ENCODE measurements at regions of chr10 and their contacts with region 1.

Region 1: DNA sequence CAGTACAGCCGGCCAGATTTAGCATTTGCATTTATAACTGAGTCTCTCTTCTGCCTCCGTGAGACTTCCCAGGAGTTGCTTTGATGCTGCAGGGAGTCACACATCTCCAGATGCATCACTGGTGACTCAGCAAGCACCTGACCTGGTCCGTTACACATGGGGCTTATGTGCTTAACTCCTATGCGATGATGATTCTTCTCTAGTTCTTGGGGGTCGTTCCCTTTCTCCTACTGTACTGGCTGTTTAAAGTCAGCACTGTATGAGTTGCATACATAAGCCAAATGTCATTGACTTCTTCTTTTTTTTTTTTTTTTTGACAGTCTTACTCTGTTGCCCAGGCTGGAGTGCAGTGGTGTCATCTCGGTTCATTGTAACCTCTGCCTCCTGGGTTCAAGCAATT is 13.0 kb upstream of the AKR1E2 start:
- DNase-seq: no peak
- ATAC-seq: no peak
- H3K4me3 Mint-ChIP-seq: no peak overlapping the region
- H3K27ac Mint-ChIP-seq: no peak overlapping the region
- H3K4me1 Mint-ChIP-seq: no peaks in the 10 kb centered on the region
- H3K27me3 Mint-ChIP-seq: peaks cover 8% of the 10 kb centered on the region

Region 2: GRCh38 chr10:4825851-4826665 is 13.0 kb after region 1 on chr10 and contains the start of gene AKR1E2:
- CTCF ChIA-PET with region 1: interaction called, 20 read pairs
- POLR2A ChIA-PET with region 1: no interaction called
- DNase-seq: peak; percentile 88
- ATAC-seq: peak; percentile 97
- H3K4me3 Mint-ChIP-seq: peak within 1 kb of the TSS; percentile 77
- H3K27ac Mint-ChIP-seq: peak within 1 kb of the TSS; percentile 67
- H3K4me1 Mint-ChIP-seq: peaks cover 17% of the 10 kb centered on the region
- H3K27me3 Mint-ChIP-seq: peaks cover 39% of the 10 kb centered on the region
- total RNA-seq, gene AKR1E2: 6.5 to 8.9 TPM

Region 3: GRCh38 chr10:4839401-4839800 is 26.4 kb after region 1 on chr10:
- CTCF ChIA-PET with region 1: interaction called, 31 read pairs
- POLR2A ChIA-PET with region 1: no interaction called
- DNase-seq: no peak
- ATAC-seq: no peak
- H3K4me3 Mint-ChIP-seq: no peak overlapping the region
- H3K27ac Mint-ChIP-seq: no peak overlapping the region
- H3K4me1 Mint-ChIP-seq: peaks cover 24% of the 10 kb centered on the region
- H3K27me3 Mint-ChIP-seq: no peaks in the 10 kb centered on the region

Region 4: DNA sequence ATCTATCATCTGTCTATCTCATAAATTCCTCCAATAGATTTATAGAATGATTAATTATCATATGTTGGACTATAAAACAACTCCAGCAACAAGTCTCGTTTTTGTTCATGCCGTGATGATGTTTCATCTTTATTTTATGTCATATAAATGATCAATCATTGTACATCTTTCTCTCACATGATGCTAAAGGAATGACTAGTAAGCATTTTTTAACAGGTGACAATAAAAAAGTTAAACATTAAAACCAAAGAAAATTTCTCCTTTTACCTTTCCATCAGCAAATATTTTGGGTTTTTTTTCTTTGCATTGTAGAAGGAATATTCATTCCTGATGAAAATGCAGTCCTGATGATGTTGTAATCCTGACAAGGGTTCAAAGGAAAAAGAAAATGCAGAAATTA is 322.6 kb after region 1 on chr10:
- CTCF ChIA-PET with region 1: no interaction called
- POLR2A ChIA-PET with region 1: no interaction called
- DNase-seq: no peak
- ATAC-seq: no peak
- H3K4me3 Mint-ChIP-seq: no peak overlapping the region
- H3K27ac Mint-ChIP-seq: no peak overlapping the region
- H3K4me1 Mint-ChIP-seq: no peaks in the 10 kb centered on the region
- H3K27me3 Mint-ChIP-seq: peaks cover 2% of the 10 kb centered on the region

Region 5: GRCh38 chr10:5283305-5284158 is 470.5 kb after region 1 on chr10:
- CTCF ChIA-PET with region 1: interaction called, 14 read pairs
- POLR2A ChIA-PET with region 1: no interaction called
- DNase-seq: peak; percentile 78
- ATAC-seq: peak; percentile 86
- H3K4me3 Mint-ChIP-seq: no peak overlapping the region
- H3K27ac Mint-ChIP-seq: peak overlapping the region; percentile 85
- H3K4me1 Mint-ChIP-seq: peaks cover 27% of the 10 kb centered on the region
- H3K27me3 Mint-ChIP-seq: peaks cover 4% of the 10 kb centered on the region

Region 6: GRCh38 chr10:5434017-5434753 is 621.2 kb after region 1 on chr10:
- CTCF ChIA-PET with region 1: interaction called, 25 read pairs
- POLR2A ChIA-PET with region 1: no interaction called
- DNase-seq: no peak
- ATAC-seq: peak; percentile 78
- H3K4me3 Mint-ChIP-seq: peak overlapping the region; percentile 8
- H3K27ac Mint-ChIP-seq: peak overlapping the region; percentile 57
- H3K4me1 Mint-ChIP-seq: peaks cover 13% of the 10 kb centered on the region
- H3K27me3 Mint-ChIP-seq: no peaks in the 10 kb centered on the region